CD8-positive, alpha-beta T cell (primary cell): ENCODE measurements at regions of chr1 and their contacts with region 1.

Region 1: DNA sequence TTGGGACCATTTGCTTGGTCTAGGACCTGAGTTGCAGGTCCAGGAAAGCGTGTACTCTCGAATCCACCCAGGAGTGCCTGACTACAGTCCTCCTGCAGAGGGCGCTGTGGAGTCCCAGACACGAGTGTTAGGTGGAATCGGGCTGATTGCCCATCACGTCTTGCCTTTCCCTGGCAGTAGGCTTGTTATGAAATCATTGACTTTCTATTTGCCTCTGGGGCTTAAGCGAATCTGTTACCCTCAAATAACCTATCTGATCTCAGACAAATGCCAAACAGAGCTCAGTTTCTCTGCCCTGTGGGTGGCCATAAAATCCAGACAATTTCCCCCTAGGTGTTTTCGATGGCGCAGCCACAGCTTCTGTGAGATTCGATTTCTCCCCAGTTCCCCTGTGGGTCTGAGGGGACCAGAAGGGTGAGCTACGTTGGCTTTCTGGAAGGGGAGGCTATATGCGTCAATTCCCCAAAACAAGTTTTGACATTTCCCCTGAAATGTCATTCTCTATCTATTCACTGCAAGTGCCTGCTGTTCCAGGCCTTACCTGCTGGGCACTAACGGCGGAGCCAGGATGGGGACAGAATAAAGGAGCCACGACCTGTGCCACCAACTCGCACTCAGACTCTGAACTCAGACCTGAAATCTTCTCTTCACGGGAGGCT is at the start of gene IL20:
- DNase-seq: peak; percentile 72 to 93 (median 86)
- ATAC-seq: peak; percentile 97
- H3K4me3 ChIP-seq: no peak within 1 kb of the TSS
- H3K4me3 Mint-ChIP-seq: no peak within 1 kb of the TSS
- H3K27ac ChIP-seq: no peak within 1 kb of the TSS
- H3K27ac Mint-ChIP-seq: no peak within 1 kb of the TSS
- H3K4me1 ChIP-seq: peaks cover 7% of the 10 kb centered on the region
- H3K4me1 Mint-ChIP-seq: peaks cover 7% of the 10 kb centered on the region
- H3K27me3 ChIP-seq: no peaks in the 10 kb centered on the region
- H3K27me3 Mint-ChIP-seq: no peaks in the 10 kb centered on the region
- CTCF ChIP-seq: peak; percentile 91
- total RNA-seq, gene IL20: not detected

Region 2: DNA sequence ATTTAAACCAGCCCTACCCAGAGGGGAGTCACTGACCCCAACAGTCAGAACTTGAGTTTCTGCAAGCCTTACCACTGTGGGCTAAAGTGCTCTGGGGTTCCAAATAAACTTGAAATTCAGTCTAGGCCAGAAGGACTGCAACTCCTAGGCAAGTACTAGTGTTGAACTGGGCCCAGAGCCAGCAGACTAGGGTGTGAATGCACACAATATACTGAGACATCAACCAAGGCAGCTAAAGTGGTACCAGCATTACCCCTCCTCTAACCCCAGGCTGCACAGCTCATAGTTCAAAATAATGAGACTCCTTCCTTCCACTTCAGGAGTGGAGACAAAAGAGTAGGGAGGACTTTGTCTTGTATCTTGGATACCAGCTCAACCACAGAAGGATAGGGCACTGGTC is 18.7 kb before region 1 on chr1:
- CTCF ChIA-PET with region 1: interaction called, 17 read pairs
- POLR2A ChIA-PET with region 1: no interaction called
- intact Hi-C with region 1: no loop called
- DNase-seq: no peak
- ATAC-seq: no peak
- H3K4me3 ChIP-seq: no peak overlapping the region
- H3K4me3 Mint-ChIP-seq: no peak overlapping the region
- H3K27ac ChIP-seq: no peak overlapping the region
- H3K27ac Mint-ChIP-seq: no peak overlapping the region
- H3K4me1 ChIP-seq: no peaks in the 10 kb centered on the region
- H3K4me1 Mint-ChIP-seq: no peaks in the 10 kb centered on the region
- H3K27me3 ChIP-seq: no peaks in the 10 kb centered on the region
- H3K27me3 Mint-ChIP-seq: peaks cover 3% of the 10 kb centered on the region
- CTCF ChIP-seq: no peak

Region 3: DNA sequence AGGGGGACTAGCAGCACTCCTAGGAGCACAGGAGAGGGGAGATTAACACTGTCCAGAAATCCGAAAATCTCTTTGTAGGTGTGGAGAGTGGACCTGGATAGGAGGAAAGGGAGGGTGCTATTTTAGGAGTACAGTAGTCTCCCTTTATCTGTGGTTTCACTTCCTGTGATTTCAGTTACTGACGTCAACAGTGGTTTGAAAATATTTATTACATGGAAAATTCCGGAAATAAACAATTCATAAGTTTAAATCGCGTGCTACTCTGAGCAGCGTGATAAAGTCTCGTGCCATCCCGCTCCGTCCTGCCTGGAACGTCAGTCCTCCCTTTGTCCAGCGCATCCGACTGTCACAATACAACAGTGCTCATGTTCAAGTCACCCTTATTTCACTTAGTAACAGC is 25.5 kb after region 1 on chr1:
- CTCF ChIA-PET with region 1: interaction called, 15 read pairs
- POLR2A ChIA-PET with region 1: no interaction called
- intact Hi-C with region 1: loop called in 1 of 2 experiments (anchors 2 kb)
- DNase-seq: peak in 1 of 9 experiments; percentile 34
- ATAC-seq: peak; percentile 46
- H3K4me3 ChIP-seq: no peak overlapping the region
- H3K4me3 Mint-ChIP-seq: peak overlapping the region; percentile 61
- H3K27ac ChIP-seq: no peak overlapping the region
- H3K27ac Mint-ChIP-seq: no peak overlapping the region
- H3K4me1 ChIP-seq: peaks cover 5% of the 10 kb centered on the region
- H3K4me1 Mint-ChIP-seq: peaks cover 28% of the 10 kb centered on the region
- H3K27me3 ChIP-seq: no peaks in the 10 kb centered on the region
- H3K27me3 Mint-ChIP-seq: no peaks in the 10 kb centered on the region
- CTCF ChIP-seq: no peak

Region 4: GRCh38 chr1:206905280-206906164 is 40.4 kb after region 1 on chr1:
- CTCF ChIA-PET with region 1: interaction called, 37 read pairs
- POLR2A ChIA-PET with region 1: interaction called, 9 read pairs
- intact Hi-C with region 1: no loop called
- DNase-seq: peak in 4 of 9 experiments; percentile 34 to 56 (median 44)
- ATAC-seq: peak; percentile 51
- H3K4me3 ChIP-seq: peak overlapping the region in 1 of 2 experiments; percentile 7
- H3K4me3 Mint-ChIP-seq: peak overlapping the region; percentile 66
- H3K27ac ChIP-seq: peak overlapping the region; percentile 5 to 55
- H3K27ac Mint-ChIP-seq: peak overlapping the region; percentile 94
- H3K4me1 ChIP-seq: peaks cover 68% of the 10 kb centered on the region
- H3K4me1 Mint-ChIP-seq: peaks cover 87% of the 10 kb centered on the region
- H3K27me3 ChIP-seq: no peaks in the 10 kb centered on the region
- H3K27me3 Mint-ChIP-seq: no peaks in the 10 kb centered on the region
- CTCF ChIP-seq: no peak

Region 5: GRCh38 chr1:207077470-207078377 is 212.6 kb after region 1 on chr1:
- CTCF ChIA-PET with region 1: no interaction called
- POLR2A ChIA-PET with region 1: no interaction called
- intact Hi-C with region 1: loop called in 1 of 2 experiments (anchors 5 kb)
- DNase-seq: peak; percentile 34 to 84 (median 59)
- ATAC-seq: peak; percentile 99
- H3K4me3 ChIP-seq: no peak overlapping the region
- H3K4me3 Mint-ChIP-seq: no peak overlapping the region
- H3K27ac ChIP-seq: no peak overlapping the region
- H3K27ac Mint-ChIP-seq: no peak overlapping the region
- H3K4me1 ChIP-seq: no peaks in the 10 kb centered on the region
- H3K4me1 Mint-ChIP-seq: peaks cover 4% of the 10 kb centered on the region
- H3K27me3 ChIP-seq: no peaks in the 10 kb centered on the region
- H3K27me3 Mint-ChIP-seq: peaks cover 6% of the 10 kb centered on the region
- CTCF ChIP-seq: peak; percentile 94